ENCODE measurements at regions of chr3 and their contacts with region 1.

Region 1: DNA sequence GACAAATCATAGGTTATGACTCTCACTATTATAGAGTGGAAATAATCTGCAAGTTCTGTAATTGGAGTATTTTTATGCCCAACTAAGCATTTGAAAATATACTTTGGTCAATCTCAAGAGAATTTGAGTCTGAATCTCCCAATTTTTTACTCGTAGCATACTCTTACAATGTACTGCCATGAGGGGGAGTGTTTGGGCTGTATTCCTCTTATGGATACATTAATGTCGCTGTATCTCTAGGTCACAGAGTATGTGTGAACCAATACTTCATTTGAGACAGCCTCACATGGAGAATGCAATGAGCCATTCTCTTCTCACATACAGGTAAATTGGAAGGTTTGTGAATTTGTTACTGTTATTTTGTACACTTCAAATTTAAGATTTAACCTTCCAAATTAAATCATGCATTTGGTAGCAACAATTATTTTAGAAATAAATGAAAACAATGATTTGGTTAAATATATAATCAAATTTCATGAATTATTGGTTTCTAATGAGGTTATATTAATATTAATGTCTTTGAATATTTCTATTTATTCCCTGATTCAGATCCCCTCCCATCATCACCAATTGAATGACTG is 5.5 kb upstream of the CD200 start:
- DNase-seq: no peak
- ATAC-seq: peak; percentile 100
- H3K4me3 Mint-ChIP-seq: no peak overlapping the region
- H3K27ac Mint-ChIP-seq: no peak overlapping the region
- H3K4me1 Mint-ChIP-seq: peaks cover 17% of the 10 kb centered on the region
- H3K27me3 Mint-ChIP-seq: no peaks in the 10 kb centered on the region
- CTCF ChIP-seq: no peak

Region 2: GRCh38 chr3:112280266-112280665 is 47.2 kb before region 1 on chr3:
- CTCF ChIA-PET with region 1: no interaction called
- POLR2A ChIA-PET with region 1: no interaction called
- intact Hi-C with region 1: no loop called
- DNase-seq: no peak
- ATAC-seq: no peak
- H3K4me3 Mint-ChIP-seq: no peak overlapping the region
- H3K27ac Mint-ChIP-seq: no peak overlapping the region
- H3K4me1 Mint-ChIP-seq: no peaks in the 10 kb centered on the region
- H3K27me3 Mint-ChIP-seq: peaks cover 3% of the 10 kb centered on the region
- CTCF ChIP-seq: no peak

Region 3: DNA sequence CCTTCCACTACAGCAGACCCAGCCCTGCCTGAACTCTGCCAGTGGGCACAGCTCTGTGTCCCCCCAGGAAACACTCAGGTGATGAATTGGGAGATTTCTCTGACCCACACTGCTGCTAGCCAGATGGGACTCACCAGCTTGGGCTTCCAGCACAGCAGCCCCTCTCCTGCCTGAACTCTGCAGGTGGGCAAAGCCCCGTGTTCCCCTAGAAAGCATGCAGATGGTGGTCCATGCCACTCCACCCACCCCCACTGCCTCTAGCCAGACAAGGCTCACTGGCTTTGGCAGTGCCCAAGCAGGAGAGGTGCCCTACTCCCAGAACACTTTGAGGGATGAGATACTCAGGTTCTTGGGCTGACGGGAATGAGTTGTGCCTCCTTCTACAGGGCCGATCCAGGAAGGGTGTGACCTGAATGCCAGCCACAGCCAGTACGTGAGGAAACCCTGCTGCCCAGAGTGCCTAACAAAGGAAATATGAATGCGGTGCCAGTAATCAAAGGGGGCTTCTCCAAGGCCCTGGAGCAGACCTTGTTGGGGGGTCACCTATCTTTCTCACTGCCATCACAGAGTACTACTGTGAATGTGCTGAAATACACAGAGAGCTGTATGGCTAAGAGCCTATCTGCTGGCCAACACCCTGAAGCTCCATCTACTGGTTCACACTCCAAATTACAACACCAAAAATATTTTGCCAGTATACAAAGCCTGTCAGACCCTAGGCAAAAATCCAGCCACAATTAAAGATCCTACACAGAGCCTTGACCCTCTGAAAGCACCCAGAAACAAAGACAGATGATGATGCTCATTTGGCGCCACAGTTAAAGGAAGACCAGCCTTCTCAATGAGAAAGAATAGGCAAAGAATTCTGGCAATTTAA is 109.9 kb after region 1 on chr3:
- CTCF ChIA-PET with region 1: interaction called, 15 read pairs
- POLR2A ChIA-PET with region 1: interaction called, 5 read pairs
- intact Hi-C with region 1: loop called (anchors 1 kb)
- DNase-seq: no peak
- ATAC-seq: peak; percentile 84
- H3K4me3 Mint-ChIP-seq: no peak overlapping the region
- H3K27ac Mint-ChIP-seq: no peak overlapping the region
- H3K4me1 Mint-ChIP-seq: peaks cover 58% of the 10 kb centered on the region
- H3K27me3 Mint-ChIP-seq: no peaks in the 10 kb centered on the region
- CTCF ChIP-seq: no peak

Region 4: DNA sequence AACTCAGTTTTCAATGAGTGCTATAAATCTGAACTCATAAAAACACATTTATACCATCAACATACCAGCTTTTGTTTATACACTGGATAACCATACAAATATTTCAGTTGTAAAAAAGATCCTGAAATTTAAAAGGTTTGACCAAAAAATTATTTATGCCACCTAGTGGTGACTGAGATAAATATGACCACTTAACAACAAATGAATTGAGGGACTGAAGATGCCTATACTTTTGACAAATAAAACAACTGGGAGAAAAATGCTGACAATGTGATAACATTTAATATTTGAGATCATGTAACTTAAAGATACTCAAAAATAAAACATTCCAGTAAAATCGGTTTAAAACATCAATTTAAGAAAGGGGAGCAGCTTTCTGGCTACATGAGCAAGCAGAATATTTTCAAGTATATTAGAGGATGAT is 203.9 kb after region 1 on chr3:
- CTCF ChIA-PET with region 1: interaction called, 8 read pairs
- POLR2A ChIA-PET with region 1: no interaction called
- intact Hi-C with region 1: loop called (anchors 1 kb)
- DNase-seq: no peak
- ATAC-seq: no peak
- H3K4me3 Mint-ChIP-seq: no peak overlapping the region
- H3K27ac Mint-ChIP-seq: peak overlapping the region; percentile 27
- H3K4me1 Mint-ChIP-seq: peaks cover 3% of the 10 kb centered on the region
- H3K27me3 Mint-ChIP-seq: no peaks in the 10 kb centered on the region
- CTCF ChIP-seq: peak; percentile 9

Measured in activated B cell treated with CpG ODN at 0.5 μM for 24 hours (primary cell).